ENCODE measurements at regions of chr4 and their contacts with region 1.

Region 1: GRCh38 chr4:109429545-109429944 is 4.1 kb upstream of the SEC24B start:
- DNase-seq: no peak
- H3K4me3 ChIP-seq: no peak overlapping the region
- H3K27ac ChIP-seq: no peak overlapping the region
- H3K4me1 ChIP-seq: peaks cover 8 to 12% (median 10%) of the 10 kb centered on the region in 3 donors
- H3K27me3 ChIP-seq: no peaks in the 10 kb centered on the region
- CTCF ChIP-seq: no peak

Region 2: GRCh38 chr4:109699553-109700225 is 270.1 kb after region 1 on chr4:
- intact Hi-C with region 1: no loop called
- DNase-seq: no peak
- H3K4me3 ChIP-seq: no peak overlapping the region
- H3K27ac ChIP-seq: no peak overlapping the region
- H3K4me1 ChIP-seq: peaks cover 0 to 14% (median 8%) of the 10 kb centered on the region in 3 donors
- H3K27me3 ChIP-seq: no peaks in the 10 kb centered on the region
- CTCF ChIP-seq: no peak

Region 3: DNA sequence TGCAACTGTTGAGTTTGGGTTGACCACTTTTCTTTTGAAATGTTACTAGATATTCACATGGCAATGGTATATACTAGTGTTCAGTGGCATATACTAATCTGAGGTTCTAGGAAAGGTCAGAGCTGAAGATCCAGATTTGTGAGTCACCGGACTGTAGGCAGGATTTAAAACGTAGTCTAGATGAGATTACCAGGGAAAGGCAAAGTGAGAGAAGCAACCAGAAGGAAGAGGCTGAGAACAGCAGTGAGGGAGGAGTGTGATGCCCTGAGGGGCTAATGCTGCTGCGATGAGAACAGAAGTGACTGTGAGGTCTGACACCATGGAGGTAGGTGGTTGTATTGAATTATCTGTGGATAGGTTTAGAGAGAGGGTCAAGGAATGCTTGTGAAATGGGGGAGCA is 310.0 kb after region 1 on chr4:
- intact Hi-C with region 1: no loop called
- DNase-seq: no peak
- H3K4me3 ChIP-seq: no peak overlapping the region
- H3K27ac ChIP-seq: no peak overlapping the region
- H3K4me1 ChIP-seq: no peaks in the 10 kb centered on the region
- H3K27me3 ChIP-seq: no peaks in the 10 kb centered on the region
- CTCF ChIP-seq: no peak

Region 4: DNA sequence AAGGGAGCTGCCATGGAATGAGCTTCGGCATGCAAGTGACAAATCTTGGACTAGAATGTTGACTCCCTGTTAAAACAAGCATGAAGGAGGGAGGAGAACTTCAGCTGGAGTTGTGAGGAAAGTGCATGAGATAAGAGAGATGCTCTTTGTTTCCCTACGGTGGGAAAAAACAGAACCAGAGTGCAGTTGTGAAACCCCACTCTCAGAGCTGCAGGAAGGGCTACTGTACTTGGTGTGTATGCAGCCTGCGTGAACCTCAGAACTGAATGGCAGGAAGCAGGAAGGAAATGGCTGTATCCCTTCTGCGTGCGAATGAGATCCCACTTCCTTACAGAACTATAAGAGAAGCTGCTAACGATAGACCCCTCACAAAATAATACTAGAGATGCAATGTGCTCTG is 540.4 kb after region 1 on chr4:
- intact Hi-C with region 1: loop called (anchors 5 kb)
- DNase-seq: peak in 1 of 5 donors; percentile 33
- H3K4me3 ChIP-seq: no peak overlapping the region
- H3K27ac ChIP-seq: no peak overlapping the region
- H3K4me1 ChIP-seq: no peaks in the 10 kb centered on the region
- H3K27me3 ChIP-seq: no peaks in the 10 kb centered on the region
- CTCF ChIP-seq: no peak

Measured in kidney (tissue), 22 donors.